GM12878 (cell line): ENCODE measurements at regions of chr16 and their contacts with region 1.

Region 1: DNA sequence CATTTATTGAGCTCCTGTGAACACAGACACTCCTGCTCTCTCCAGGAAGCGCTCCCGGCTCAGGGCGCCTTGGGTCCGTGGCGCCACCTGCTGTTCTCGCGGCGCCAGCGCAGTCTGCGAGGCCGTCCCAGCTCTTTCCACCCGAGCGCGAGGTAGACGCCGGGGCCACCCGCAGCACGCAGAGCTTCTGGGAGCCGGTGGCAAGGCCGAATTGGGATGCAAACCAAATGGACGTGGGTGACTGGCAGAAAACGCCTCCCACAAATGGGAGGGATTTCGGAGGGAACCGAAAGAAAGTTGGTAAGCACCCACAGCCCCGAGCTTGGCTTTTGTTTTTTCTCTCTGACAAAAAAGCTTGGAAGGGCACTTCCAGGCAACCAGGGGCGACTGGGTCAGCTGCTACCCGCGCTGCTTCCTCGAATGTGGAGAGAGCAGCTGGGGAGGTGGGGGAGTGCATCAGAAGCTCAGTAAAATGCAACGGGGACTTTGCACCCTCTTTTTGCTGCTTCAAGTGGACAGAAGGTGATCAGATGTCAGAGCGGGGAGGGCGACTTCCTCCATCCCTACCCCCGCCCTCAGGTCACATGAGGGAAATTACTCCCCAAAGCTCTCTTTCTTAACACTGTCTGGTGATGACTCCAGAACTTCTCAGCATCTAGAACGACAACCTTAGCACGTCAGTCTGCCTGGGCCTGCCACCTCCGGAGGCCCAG is 13.5 kb upstream of the N4BP1 start:
- DNase-seq: peak; percentile 53
- ATAC-seq: peak; percentile 99
- H3K4me3 ChIP-seq: peak overlapping the region; percentile 64
- H3K27ac ChIP-seq: no peak overlapping the region
- H3K4me1 ChIP-seq: peaks cover 11% of the 10 kb centered on the region
- H3K27me3 ChIP-seq: no peaks in the 10 kb centered on the region; a peak in 1 of 4 replicates
- CTCF ChIP-seq: peak; percentile 96 to 99 (median 98)
- EP300 ChIP-seq: no peak
- POLR2A ChIP-seq: no peak
- RAD21 ChIP-seq: peak; percentile 98

Region 2: DNA sequence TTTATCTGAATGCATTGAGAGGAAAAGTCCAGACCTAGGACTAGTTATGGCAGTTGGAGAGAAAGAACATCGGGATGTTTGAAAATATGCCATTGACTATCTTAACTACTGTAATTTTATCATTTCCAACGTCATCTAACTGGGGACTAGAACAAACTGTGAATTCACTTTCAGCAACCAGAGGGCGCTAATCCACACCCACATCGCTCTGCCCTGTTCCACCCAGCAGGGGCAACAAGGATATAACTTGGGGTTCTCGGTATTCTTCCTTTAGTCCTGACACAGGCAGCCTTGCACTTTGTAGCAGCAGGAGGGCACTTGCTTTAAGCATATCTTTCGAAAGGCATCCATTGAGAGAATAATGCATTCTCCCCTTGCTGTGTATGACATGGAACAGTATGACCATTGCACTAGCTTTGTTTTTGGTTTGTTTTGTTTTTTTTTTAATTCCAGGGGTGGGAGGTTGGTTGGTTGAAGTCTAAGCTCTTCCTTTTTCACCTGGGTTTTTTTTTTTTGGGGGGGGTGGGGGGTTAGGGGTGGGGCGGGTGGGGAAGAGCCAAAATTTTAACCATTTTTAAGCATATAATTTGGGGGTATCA is 269.8 kb before region 1 on chr16:
- CTCF ChIA-PET with region 1: interaction called, 97 read pairs
- POLR2A ChIA-PET with region 1: interaction called, 17 read pairs
- RAD21 ChIA-PET with region 1: interaction called, 77 read pairs
- SMC1A ChIA-PET with region 1: interaction called, 60 read pairs
- in situ Hi-C with region 1: loop called (anchors 5 kb)
- intact Hi-C with region 1: loop called (anchors 1 kb)
- DNase-seq: peak; percentile 37
- ATAC-seq: peak; percentile 94
- H3K4me3 ChIP-seq: no peak overlapping the region
- H3K27ac ChIP-seq: no peak overlapping the region
- H3K4me1 ChIP-seq: peaks cover 5% of the 10 kb centered on the region
- H3K27me3 ChIP-seq: no peaks in the 10 kb centered on the region
- CTCF ChIP-seq: peak; percentile 86 to 93 (median 91)
- EP300 ChIP-seq: no peak
- POLR2A ChIP-seq: no peak
- RAD21 ChIP-seq: peak; percentile 88

Region 3: DNA sequence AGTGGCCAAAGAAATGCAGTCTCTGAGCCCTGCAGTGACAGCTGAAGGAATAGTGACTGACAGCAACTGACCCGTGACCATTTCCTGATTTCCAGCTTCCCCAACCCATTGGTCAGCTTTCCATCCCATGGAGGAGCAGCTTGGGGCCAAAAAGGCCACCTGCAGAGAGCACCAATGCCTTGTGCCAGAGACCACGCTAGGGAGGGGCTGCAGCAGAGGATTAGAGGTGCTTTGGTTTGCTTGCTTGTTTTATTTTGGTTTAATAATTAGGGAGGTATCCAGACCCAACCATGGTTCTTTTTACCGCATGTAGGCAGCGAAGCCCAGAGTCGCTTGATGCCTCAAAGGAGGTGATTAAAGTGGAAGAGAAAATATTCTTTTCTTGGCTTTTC is 176.9 kb before region 1 on chr16:
- CTCF ChIA-PET with region 1: no interaction called
- POLR2A ChIA-PET with region 1: no interaction called
- RAD21 ChIA-PET with region 1: no interaction called
- SMC1A ChIA-PET with region 1: no interaction called
- in situ Hi-C with region 1: no loop called
- intact Hi-C with region 1: no loop called
- DNase-seq: no peak
- ATAC-seq: no peak
- H3K4me3 ChIP-seq: no peak overlapping the region
- H3K27ac ChIP-seq: no peak overlapping the region
- H3K4me1 ChIP-seq: no peaks in the 10 kb centered on the region
- H3K27me3 ChIP-seq: no peaks in the 10 kb centered on the region
- CTCF ChIP-seq: no peak
- EP300 ChIP-seq: no peak
- POLR2A ChIP-seq: no peak
- RAD21 ChIP-seq: no peak

Region 4: GRCh38 chr16:48470232-48470631 is 153.2 kb before region 1 on chr16:
- CTCF ChIA-PET with region 1: interaction called, 10 read pairs
- POLR2A ChIA-PET with region 1: no interaction called
- RAD21 ChIA-PET with region 1: interaction called, 3 read pairs
- SMC1A ChIA-PET with region 1: interaction called, 4 read pairs
- in situ Hi-C with region 1: no loop called
- intact Hi-C with region 1: no loop called
- DNase-seq: no peak
- ATAC-seq: no peak
- H3K4me3 ChIP-seq: no peak overlapping the region
- H3K27ac ChIP-seq: no peak overlapping the region
- H3K4me1 ChIP-seq: no peaks in the 10 kb centered on the region
- H3K27me3 ChIP-seq: no peaks in the 10 kb centered on the region
- CTCF ChIP-seq: no peak
- EP300 ChIP-seq: no peak
- POLR2A ChIP-seq: no peak
- RAD21 ChIP-seq: no peak

Region 5: GRCh38 chr16:48542020-48542473 is 81.4 kb before region 1 on chr16:
- CTCF ChIA-PET with region 1: interaction called, 43 read pairs
- POLR2A ChIA-PET with region 1: interaction called, 4 read pairs
- RAD21 ChIA-PET with region 1: interaction called, 27 read pairs
- SMC1A ChIA-PET with region 1: interaction called, 30 read pairs
- in situ Hi-C with region 1: no loop called
- intact Hi-C with region 1: no loop called
- DNase-seq: no peak
- ATAC-seq: peak; percentile 63
- H3K4me3 ChIP-seq: no peak overlapping the region
- H3K27ac ChIP-seq: no peak overlapping the region
- H3K4me1 ChIP-seq: peaks cover 4% of the 10 kb centered on the region
- H3K27me3 ChIP-seq: no peaks in the 10 kb centered on the region
- CTCF ChIP-seq: peak; percentile 32 to 67 (median 40); a peak in 4 of 6 replicates
- EP300 ChIP-seq: no peak
- POLR2A ChIP-seq: peak; percentile 66
- RAD21 ChIP-seq: peak; percentile 62

Region 6: GRCh38 chr16:48596326-48596725 is 27.1 kb before region 1 on chr16:
- CTCF ChIA-PET with region 1: interaction called, 17 read pairs
- POLR2A ChIA-PET with region 1: interaction called, 4 read pairs
- RAD21 ChIA-PET with region 1: interaction called, 8 read pairs
- SMC1A ChIA-PET with region 1: interaction called, 8 read pairs
- in situ Hi-C with region 1: no loop called
- intact Hi-C with region 1: no loop called
- DNase-seq: no peak
- ATAC-seq: peak; percentile 91
- H3K4me3 ChIP-seq: no peak overlapping the region
- H3K27ac ChIP-seq: peak overlapping the region; percentile 17; the same call in 1 of the 2 replicates
- H3K4me1 ChIP-seq: peaks cover 22% of the 10 kb centered on the region
- H3K27me3 ChIP-seq: no peaks in the 10 kb centered on the region
- CTCF ChIP-seq: no peak
- EP300 ChIP-seq: peak; percentile 46 to 87; a peak in 2 of 4 replicates
- POLR2A ChIP-seq: no peak
- RAD21 ChIP-seq: no peak